HEK293 (cell line): ENCODE measurements at regions of chr1 and their contacts with region 1.

Region 1: GRCh38 chr1:9145021-9145668 is 16.2 kb upstream of the GPR157 start:
- H3K4me3 ChIP-seq: no peak overlapping the region
- H3K27ac ChIP-seq: no peak overlapping the region
- H3K4me1 ChIP-seq: no peaks in the 10 kb centered on the region
- CTCF ChIP-seq: no peak

Region 2: DNA sequence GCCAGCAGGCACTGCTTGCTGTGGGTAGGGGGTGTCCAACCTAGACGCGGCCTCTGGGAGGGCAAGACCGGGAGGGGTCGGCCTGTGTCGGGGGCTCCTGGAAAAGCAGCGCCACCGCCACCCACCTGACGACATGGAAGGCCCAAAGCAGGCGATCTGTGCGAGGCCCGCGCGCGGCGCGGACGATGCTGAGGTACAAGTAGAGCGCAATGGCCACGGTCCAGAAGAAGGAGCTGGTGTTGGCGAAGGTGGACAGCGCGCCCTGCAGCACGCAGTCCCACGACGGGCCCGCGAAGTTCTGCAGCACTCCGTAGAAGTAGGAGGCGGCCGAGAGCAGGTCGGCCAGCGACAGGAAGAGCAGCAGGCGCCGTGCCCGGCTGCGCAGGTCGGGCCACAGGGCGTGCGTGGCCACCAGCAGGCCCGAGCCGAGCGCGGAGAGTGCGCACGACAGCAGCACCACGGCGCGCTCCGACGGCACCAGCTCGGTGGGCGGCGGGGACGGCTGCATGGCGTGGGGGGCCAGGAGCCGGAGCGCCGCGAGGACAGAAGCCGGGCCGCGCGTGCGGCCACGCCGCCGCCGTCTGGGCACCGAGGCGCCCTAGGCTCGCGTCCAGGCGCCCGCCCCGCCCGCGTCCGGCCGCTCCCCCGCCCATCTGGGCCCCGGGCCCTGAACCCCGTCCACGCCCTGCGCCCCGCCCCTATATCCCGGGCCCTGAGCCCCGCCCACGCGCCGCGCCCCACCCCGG is 16.5 kb before region 1 on chr1 and contains the start of gene GPR157:
- CTCF ChIA-PET with region 1: interaction called, 26 read pairs
- POLR2A ChIA-PET with region 1: interaction called, 7 read pairs
- H3K4me3 ChIP-seq: peak within 1 kb of the TSS; percentile 58
- H3K27ac ChIP-seq: peak within 1 kb of the TSS; percentile 74; the same call in 1 of the 2 replicates
- H3K4me1 ChIP-seq: no peaks in the 10 kb centered on the region
- CTCF ChIP-seq: peak; percentile 96

Region 3: DNA sequence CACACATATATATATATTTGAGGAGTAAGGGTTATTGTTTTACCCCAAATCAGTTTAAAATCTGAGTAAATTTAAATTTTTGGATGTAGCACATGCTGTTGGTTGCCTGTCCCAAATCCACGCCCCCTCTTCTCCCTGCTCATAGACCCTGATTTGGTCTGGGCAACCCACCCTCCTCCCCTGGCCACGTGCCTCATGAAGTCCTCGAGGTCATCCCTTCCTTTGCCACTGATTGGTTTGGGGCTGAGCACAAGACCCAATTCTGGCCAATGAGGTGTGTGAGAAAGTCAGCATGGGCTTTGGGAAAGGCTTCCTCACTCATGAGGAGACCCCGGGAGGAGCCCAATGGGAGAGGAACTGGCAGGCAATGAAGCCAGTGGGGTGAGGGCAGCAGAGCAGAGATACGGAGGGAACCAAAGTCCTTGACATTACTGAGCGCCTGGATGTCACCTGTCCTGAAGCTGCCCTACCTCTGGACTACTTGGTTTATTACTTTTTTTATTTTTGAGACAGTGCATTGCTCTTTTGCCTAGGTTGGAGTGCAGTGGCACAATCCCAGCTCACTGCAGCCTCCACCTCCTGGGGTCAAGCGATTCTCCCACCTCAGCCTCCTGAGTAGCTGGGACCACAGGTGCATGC is 15.1 kb after region 1 on chr1:
- CTCF ChIA-PET with region 1: interaction called, 13 read pairs
- POLR2A ChIA-PET with region 1: interaction called, 3 read pairs
- H3K4me3 ChIP-seq: no peak overlapping the region
- H3K27ac ChIP-seq: no peak overlapping the region
- H3K4me1 ChIP-seq: peaks cover 17% of the 10 kb centered on the region
- CTCF ChIP-seq: no peak

Region 4: DNA sequence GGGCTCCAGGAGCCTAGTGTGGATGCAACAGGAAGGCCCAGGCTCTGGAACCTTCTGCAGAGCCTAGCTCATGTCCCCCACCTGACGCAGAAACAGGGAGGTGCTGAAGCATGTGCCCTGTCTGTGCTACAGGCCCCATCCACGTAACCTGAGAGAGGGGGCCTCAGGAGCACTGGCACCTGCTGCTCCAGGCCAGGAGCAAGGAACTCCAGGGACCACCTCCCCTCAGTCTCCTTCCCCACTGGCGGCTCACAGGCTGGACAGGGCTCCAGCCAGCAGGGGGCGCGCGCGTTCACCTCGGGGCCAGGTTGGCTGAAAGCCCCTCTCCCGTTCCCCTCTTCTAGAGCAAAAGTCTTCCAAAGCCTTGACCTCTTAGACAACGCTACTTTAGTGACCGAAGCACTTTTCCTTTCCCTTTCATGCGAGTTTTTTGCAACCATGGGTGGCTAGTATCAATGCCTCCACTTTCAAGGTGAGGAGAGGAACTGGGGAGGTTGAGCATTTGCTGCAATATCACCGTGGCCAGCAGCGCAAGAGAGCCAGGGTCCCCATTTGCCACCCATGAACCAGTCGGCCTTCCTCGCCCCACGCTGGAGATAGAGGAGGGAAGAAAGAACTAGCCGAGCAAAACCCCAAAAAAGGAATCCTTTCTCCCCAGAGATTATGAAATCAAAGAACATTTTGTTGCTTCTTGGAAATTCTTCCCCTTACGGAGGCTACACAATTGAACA is 36.2 kb after region 1 on chr1:
- CTCF ChIA-PET with region 1: interaction called, 15 read pairs
- POLR2A ChIA-PET with region 1: interaction called, 5 read pairs
- H3K4me3 ChIP-seq: peak overlapping the region; percentile 86
- H3K27ac ChIP-seq: peak overlapping the region; percentile 97
- H3K4me1 ChIP-seq: peaks cover 7% of the 10 kb centered on the region; the same call in 1 of the 2 replicates
- CTCF ChIP-seq: peak; percentile 96

Region 5: DNA sequence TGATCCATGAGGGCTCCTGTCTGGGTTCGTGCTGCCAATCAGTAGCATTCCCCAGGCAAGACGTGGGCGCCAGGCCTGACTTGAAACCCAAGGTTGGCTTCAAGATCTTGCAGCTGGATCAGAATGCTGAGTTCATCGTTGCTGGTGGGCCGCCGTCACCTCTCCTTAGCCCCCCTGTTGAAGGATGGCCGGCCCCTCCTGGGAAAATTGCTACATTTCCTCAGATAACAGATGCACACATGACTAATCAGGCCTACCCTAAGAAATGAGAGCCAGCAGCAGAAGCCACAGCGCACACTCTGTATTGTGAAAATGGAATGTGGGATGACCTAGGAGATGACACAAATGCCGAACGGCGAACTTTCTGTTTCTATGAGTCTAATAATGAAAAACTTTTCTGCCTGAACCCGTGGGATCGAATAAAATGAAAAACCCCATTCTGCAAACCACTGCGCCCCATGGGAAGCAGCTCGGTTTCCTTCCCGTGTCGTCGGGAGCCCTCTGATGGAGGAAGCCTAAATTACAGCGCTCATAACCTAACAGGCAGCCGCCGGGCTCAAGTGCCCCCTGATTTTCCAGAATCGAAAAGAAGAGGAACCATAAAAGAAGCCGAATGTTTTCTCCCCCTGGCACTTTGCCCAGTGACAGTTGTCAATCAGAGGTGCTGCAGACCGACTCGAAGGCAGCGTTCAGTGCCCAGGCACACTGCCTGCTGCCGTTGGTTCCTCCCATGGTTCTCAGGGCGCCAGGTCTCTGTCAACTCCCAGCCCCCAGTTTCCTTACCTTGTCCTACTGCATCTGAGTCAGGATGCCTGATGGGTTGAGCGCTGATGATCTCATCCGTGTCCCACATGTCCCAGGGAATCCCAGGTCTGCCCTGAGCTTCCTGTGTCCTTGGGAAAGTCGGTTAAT is 51.2 kb after region 1 on chr1:
- CTCF ChIA-PET with region 1: interaction called, 57 read pairs
- POLR2A ChIA-PET with region 1: no interaction called
- H3K4me3 ChIP-seq: no peak overlapping the region
- H3K27ac ChIP-seq: no peak overlapping the region
- H3K4me1 ChIP-seq: no peaks in the 10 kb centered on the region
- CTCF ChIP-seq: peak; percentile 57